ENCODE measurements at regions of chr1 and their contacts with region 1.

Region 1: DNA sequence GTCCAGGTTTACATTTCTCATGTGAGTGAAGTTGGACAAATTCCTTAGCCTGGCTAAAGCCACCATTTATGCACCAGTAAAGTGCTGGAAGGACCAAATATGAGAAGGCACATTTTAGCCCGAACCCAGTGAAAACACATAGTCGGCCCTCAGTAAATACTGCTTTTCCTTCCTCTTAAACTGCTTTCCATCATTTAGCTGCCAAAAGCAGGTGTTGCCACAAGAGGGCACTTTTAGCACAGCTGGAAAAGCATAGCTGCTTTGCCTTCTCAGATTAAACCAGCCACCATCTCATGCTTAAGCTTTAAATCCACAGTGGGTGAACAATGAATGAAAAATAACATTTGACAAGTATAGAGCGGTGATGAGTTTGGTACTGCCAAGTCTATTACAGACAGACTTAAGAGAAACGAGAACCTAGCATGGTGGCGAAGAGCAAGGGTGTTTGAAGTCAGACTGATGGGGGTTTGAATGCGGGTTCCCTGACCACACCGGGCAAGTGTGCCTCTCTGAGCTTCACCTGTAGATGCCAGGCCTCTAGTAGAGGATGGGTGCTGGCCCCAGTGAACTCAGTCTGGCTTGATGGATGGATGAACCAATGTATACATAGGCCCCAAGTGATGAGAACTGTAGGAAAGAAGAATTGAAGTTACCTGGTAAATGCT is 57.8 kb downstream of the SLC35D1 start:
- DNase-seq: peak; percentile 58
- CTCF ChIP-seq: peak; percentile 88

Region 2: DNA sequence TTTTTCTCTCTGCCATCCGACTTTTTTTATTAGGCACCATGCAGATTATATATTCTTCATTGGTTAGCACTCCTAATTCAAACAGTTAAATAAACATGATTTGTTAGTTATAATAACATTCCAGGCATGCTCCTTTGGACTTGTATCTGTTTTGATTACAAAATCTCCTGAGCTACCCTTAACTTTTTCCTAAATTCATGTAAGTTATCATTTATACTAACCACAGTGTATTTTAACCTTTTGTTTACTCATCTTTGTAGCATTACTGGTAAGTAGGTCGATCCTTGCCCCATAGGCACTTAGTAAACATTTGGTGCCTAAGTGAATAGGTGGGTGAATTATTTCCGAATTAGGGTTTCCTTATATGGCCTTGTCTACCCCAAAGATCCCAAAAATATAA is 27.6 kb before region 1 on chr1:
- CTCF ChIA-PET with region 1: interaction called, 10 read pairs
- POLR2A ChIA-PET with region 1: no interaction called
- DNase-seq: no peak
- CTCF ChIP-seq: no peak

Region 3: GRCh38 chr1:66984491-66984890 is 11.7 kb before region 1 on chr1:
- CTCF ChIA-PET with region 1: interaction called, 31 read pairs
- POLR2A ChIA-PET with region 1: no interaction called
- DNase-seq: peak; percentile 38
- CTCF ChIP-seq: no peak

Region 4: GRCh38 chr1:67013573-67013972 is 17.4 kb after region 1 on chr1:
- CTCF ChIA-PET with region 1: interaction called, 21 read pairs
- POLR2A ChIA-PET with region 1: no interaction called
- DNase-seq: no peak
- CTCF ChIP-seq: no peak

Region 5: GRCh38 chr1:67019600-67020136 is 23.5 kb after region 1 on chr1:
- CTCF ChIA-PET with region 1: interaction called, 21 read pairs
- POLR2A ChIA-PET with region 1: no interaction called
- DNase-seq: no peak
- CTCF ChIP-seq: no peak

Region 6: GRCh38 chr1:67053785-67054772 is 57.9 kb after region 1 on chr1 and contains the start of gene SLC35D1:
- CTCF ChIA-PET with region 1: interaction called, 11 read pairs
- POLR2A ChIA-PET with region 1: no interaction called
- DNase-seq: peak; percentile 89
- CTCF ChIP-seq: no peak

Region 7: DNA sequence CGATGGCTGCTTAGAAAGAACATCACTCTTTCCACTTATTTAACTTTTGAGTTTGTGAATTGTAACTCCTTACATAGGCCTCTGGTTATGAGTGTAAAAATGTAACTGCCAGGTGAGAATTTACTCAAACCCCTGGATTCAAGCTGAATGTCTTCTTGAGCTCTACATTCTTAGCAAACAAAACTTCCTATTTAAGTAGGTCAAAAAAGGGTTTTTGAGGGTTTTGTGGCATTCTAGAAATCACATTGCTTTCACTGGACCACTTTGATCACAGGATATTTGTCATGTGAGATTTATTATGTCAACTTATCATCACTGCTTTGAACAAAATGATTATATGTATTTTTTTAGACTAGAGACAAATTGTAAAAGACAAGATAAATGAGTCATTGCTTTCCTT is 175.8 kb after region 1 on chr1:
- CTCF ChIA-PET with region 1: no interaction called
- POLR2A ChIA-PET with region 1: no interaction called
- DNase-seq: no peak
- CTCF ChIP-seq: no peak

Measured in GM10248 (cell line).